ENCODE measurements at regions of chr6 and their contacts with region 1.

Region 1: DNA sequence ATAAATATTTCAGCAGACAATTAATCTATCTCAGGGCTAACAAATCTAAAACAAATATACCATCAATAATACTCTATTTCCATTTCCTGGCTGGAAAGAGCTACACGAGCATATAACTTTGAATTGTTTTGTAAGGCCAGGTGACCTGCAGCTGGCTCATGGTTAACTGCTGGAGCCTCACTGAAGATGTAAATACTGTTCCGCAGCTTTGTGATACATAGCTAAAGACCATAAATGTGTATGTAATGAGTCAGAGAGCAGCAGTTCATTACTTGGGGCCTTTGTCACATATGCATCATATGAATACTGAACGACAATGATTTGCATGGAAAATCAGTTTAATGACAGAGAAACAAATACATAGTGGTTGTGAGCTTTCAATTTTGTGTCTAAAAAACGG is 109.4 kb upstream of the CCN2 start:
- DNase-seq: peak in 1 of 2 experiments; percentile 27
- H3K4me3 ChIP-seq: no peak overlapping the region
- H3K27ac ChIP-seq: no peak overlapping the region
- H3K4me1 ChIP-seq: 0 out of 2 replicates have a peak, but pooled peaks cover 6% of the 10 kb centered on the region
- H3K27me3 ChIP-seq: no peaks in the 10 kb centered on the region
- CTCF ChIP-seq: no peak

Region 2: DNA sequence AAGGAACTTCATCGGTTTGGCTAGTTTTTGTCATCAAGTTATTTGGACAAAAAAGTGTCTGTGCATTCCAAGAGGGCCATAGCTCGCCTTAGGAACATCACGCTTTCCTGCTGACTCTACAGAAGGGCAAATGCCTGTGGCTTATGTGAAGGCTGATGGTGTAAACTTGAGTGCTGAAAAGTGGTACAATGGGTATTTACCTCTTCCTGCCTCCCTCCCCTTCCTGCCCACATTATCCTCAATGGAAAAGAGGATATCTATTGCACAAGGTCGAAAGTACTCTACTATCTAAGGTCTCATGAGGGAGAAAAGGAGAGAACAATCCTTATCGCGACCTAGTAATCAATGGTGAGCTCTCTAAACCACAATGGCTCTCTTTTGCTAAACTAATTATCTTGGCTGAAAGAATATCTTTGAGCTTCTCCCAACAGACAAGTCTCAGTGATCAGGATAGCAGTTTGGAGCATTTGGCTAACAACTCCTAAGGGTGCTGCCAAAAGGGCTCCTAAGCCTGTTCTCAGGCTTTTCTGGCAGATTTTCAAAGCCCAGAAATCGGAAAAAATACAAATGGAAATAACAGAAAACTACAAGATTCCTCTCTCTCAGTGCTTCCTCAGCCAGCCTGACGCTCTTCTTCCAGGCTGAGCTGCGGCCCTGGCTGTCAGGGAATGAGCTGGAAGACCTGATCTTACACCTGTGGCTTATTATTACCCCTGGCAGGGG is 295.3 kb before region 1 on chr6:
- CTCF ChIA-PET with region 1: no interaction called
- POLR2A ChIA-PET with region 1: no interaction called
- intact Hi-C with region 1: no loop called
- DNase-seq: no peak
- H3K4me3 ChIP-seq: no peak overlapping the region
- H3K27ac ChIP-seq: no peak overlapping the region
- H3K4me1 ChIP-seq: no peaks in the 10 kb centered on the region
- H3K27me3 ChIP-seq: no peaks in the 10 kb centered on the region
- CTCF ChIP-seq: no peak

Region 3: GRCh38 chr6:132569170-132569569 is 508.6 kb after region 1 on chr6:
- CTCF ChIA-PET with region 1: no interaction called
- POLR2A ChIA-PET with region 1: no interaction called
- intact Hi-C with region 1: no loop called
- DNase-seq: no peak
- H3K4me3 ChIP-seq: no peak overlapping the region
- H3K27ac ChIP-seq: no peak overlapping the region
- H3K4me1 ChIP-seq: no peaks in the 10 kb centered on the region
- H3K27me3 ChIP-seq: no peaks in the 10 kb centered on the region
- CTCF ChIP-seq: no peak

Region 4: DNA sequence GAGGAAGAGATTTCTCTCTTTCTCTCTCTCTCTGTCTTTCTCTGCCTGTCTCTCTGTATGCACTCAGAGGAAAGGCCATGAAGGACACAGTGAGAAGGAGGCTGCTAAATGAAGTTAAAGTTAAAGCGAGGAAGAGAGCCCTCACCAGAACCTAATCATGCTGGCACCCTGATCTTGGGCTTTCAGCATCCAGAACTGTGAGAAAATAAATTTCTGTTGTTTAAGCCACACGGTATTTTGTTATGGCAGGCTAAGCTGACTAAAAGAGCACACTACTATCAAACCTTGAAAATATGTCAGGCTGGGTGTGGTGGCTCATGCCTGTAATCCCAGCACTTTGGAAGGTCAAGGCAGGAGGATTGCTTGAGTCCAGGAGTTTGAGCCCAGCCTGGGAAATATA is 1820.3 kb after region 1 on chr6:
- CTCF ChIA-PET with region 1: no interaction called
- POLR2A ChIA-PET with region 1: interaction called, 11 read pairs
- intact Hi-C with region 1: no loop called
- DNase-seq: no peak
- H3K4me3 ChIP-seq: no peak overlapping the region
- H3K27ac ChIP-seq: no peak overlapping the region
- H3K4me1 ChIP-seq: no peaks in the 10 kb centered on the region
- H3K27me3 ChIP-seq: no peaks in the 10 kb centered on the region
- CTCF ChIP-seq: no peak